Natural killer cell (primary cell): ENCODE measurements at regions of chr2 and their contacts with region 1.

Region 1: GRCh38 chr2:114876372-114876771 is 433.9 kb downstream of the DPP10 start:
- DNase-seq: no peak
- ATAC-seq: no peak
- H3K4me3 ChIP-seq: no peak overlapping the region
- H3K4me3 Mint-ChIP-seq: no peak overlapping the region
- H3K27ac ChIP-seq: no peak overlapping the region
- H3K27ac Mint-ChIP-seq: no peak overlapping the region
- H3K4me1 ChIP-seq: no peaks in the 10 kb centered on the region
- H3K4me1 Mint-ChIP-seq: no peaks in the 10 kb centered on the region
- H3K27me3 ChIP-seq: no peaks in the 10 kb centered on the region
- H3K27me3 Mint-ChIP-seq: no peaks in the 10 kb centered on the region
- CTCF ChIP-seq: no peak

Region 2: GRCh38 chr2:114534116-114535084 is 342.0 kb before region 1 on chr2:
- intact Hi-C with region 1: loop called (anchors 10 kb)
- DNase-seq: no peak
- ATAC-seq: no peak
- H3K4me3 ChIP-seq: no peak overlapping the region
- H3K4me3 Mint-ChIP-seq: no peak overlapping the region
- H3K27ac ChIP-seq: no peak overlapping the region
- H3K27ac Mint-ChIP-seq: no peak overlapping the region
- H3K4me1 ChIP-seq: no peaks in the 10 kb centered on the region
- H3K4me1 Mint-ChIP-seq: no peaks in the 10 kb centered on the region
- H3K27me3 ChIP-seq: no peaks in the 10 kb centered on the region
- H3K27me3 Mint-ChIP-seq: peaks cover 0 to 2% of the 10 kb centered on the region in 2 donors
- CTCF ChIP-seq: no peak